Pancreas (tissue), 10 donors: ENCODE measurements at regions of chr7 and their contacts with region 1.

Region 1: DNA sequence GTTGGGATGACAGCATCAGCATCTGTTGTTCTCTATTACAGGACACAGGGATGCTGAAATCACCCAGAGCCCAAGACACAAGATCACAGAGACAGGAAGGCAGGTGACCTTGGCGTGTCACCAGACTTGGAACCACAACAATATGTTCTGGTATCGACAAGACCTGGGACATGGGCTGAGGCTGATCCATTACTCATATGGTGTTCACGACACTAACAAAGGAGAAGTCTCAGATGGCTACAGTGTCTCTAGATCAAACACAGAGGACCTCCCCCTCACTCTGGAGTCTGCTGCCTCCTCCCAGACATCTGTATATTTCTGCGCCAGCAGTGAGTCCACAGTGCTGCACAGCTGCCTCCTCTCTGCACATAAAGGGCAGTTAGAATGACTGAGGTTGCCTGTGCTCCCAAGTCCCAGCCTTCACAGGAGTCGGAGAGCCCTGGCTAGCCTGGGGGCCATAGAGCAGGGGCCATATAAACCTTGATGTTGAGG is 142.2 kb upstream of the PRSS58 start:
- DNase-seq: no peak
- ATAC-seq: no peak
- H3K4me3 ChIP-seq: no peak overlapping the region
- H3K27ac ChIP-seq: no peak overlapping the region
- H3K4me1 ChIP-seq: no peaks in the 10 kb centered on the region
- H3K27me3 ChIP-seq: no peaks in the 10 kb centered on the region
- CTCF ChIP-seq: no peak

Region 2: DNA sequence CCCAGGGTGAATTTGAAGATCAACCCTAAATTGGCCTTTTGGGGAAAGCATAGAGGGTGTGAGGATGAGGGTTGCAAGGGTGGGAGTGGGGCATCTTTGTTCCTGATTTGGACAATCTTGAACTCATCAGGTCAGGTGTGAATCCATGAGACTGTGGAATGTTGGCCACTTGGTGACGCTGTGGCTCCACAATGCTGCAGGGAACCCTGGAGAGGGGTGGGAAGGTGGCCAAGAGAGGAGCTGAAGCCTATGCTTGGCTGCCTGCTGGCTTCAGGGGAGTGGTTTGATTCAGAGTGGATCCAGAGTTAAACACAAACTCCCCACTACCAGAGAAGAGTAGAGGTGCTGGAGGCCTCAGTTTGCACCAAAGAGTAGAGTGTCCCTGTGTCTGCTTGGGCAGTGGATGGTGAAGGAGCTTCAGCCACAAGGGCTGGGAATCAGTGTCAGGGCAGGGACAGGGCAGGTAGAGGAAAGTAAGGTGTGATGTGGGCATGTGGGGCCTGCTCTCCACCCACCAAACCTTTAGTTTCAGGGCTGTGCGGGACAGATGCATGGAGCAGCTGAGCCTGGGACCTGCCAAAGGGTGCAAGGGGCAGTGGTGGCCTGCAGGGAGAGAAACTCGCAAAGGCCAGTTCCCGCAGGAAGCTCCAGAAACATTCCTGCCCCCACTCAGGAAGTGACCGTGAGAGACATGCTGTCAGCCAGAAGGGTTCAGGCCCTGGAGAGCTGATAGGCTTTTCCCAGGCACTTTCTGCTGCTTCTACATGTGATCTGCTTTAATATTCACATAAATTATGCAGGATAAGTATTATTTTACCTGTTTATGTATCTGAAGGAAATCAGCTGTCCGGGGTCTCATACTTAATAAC is 61.2 kb before region 1 on chr7:
- intact Hi-C with region 1: no loop called
- DNase-seq: no peak
- ATAC-seq: no peak
- H3K4me3 ChIP-seq: no peak overlapping the region
- H3K27ac ChIP-seq: no peak overlapping the region
- H3K4me1 ChIP-seq: no peaks in the 10 kb centered on the region
- H3K27me3 ChIP-seq: no peaks in the 10 kb centered on the region
- CTCF ChIP-seq: no peak

Region 3: DNA sequence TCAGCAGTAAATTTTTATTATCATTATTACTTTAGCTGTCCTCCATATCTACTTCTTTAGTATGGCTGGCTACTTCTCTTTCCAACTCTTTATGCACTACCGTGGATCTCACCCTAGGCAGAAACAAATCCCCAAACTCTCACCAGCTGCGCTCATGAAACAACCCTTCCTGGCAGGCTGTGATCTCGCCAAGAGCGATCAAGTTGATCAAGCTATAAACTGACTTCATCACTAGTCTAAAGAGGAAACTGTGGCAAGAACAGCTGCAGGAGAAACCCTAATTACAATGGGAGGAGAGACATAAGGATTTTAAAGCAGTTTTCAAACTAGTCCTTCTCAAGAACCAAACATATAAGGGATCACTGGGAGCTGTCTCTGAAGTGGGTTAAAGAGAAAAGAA is 18.2 kb after region 1 on chr7:
- intact Hi-C with region 1: loop called in 1 of 3 experiments (anchors 2 kb)
- DNase-seq: no peak
- ATAC-seq: no peak
- H3K4me3 ChIP-seq: no peak overlapping the region
- H3K27ac ChIP-seq: no peak overlapping the region
- H3K4me1 ChIP-seq: no peaks in the 10 kb centered on the region
- H3K27me3 ChIP-seq: no peaks in the 10 kb centered on the region
- CTCF ChIP-seq: no peak

Region 4: GRCh38 chr7:142535123-142535779 is 135.2 kb after region 1 on chr7:
- intact Hi-C with region 1: no loop called
- DNase-seq: peak in 4 of 6 donors; percentile 37 to 78 (median 62)
- ATAC-seq: peak; percentile 82 to 93 (median 90)
- H3K4me3 ChIP-seq: no peak overlapping the region
- H3K27ac ChIP-seq: no peak overlapping the region
- H3K4me1 ChIP-seq: no peaks in the 10 kb centered on the region
- H3K27me3 ChIP-seq: no peaks in the 10 kb centered on the region
- CTCF ChIP-seq: peak; percentile 25 to 66 (median 54)